Heart left ventricle (tissue), 16 donors: ENCODE measurements at regions of chr14 and their contacts with region 1.

Region 1: GRCh38 chr14:73785873-73786695 is 65.5 kb upstream of the PTGR2 start:
- DNase-seq: peak; percentile 66 to 87 (median 81)
- ATAC-seq: peak; percentile 52 to 76 (median 70)
- H3K4me3 ChIP-seq: peak overlapping the region; percentile 47 to 95 (median 78)
- H3K27ac ChIP-seq: peak overlapping the region; percentile 95 to 100 (median 98)
- H3K4me1 ChIP-seq: peaks cover 22 to 86% (median 77%) of the 10 kb centered on the region in 12 donors
- H3K27me3 ChIP-seq: no peaks in the 10 kb centered on the region
- CTCF ChIP-seq: peak in 7 of 12 donors; percentile 12 to 38 (median 23)
- POLR2A ChIP-seq: no peak

Region 2: DNA sequence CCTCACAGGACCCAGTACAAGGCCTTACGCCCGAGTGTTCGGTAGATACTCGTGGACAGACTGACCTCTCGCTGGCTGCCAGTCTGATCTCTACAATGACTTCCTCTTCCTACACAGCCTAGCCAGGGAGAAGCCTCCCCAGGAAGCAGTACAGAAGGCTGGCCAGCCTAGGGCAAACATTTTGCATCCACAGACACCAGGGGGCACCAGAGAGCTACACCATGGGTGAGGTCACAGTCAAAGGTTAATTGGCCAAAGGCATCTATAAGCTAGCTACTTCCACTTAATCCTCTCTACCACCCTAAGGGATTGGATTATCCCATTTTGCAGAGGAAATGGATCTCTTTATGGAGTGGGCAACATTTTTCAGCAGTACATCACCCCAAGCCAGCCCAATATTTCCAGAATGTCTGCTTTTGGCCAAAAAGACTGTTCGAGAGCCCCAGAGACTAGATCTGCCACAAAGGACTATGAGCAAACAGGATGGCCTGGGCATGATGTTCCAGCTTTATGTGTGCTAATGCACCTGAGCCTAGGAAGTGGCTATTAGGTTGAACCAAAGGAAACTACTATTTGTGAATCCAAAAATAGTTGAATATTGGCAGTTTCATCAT is 57.3 kb before region 1 on chr14:
- intact Hi-C with region 1: loop called in 2 of 10 experiments (anchors 2 to 10 kb)
- DNase-seq: peak; percentile 86 to 91 (median 88)
- ATAC-seq: peak; percentile 64 to 80 (median 76)
- H3K4me3 ChIP-seq: no peak overlapping the region
- H3K27ac ChIP-seq: peak overlapping the region in 10 of 12 donors; percentile 22 to 84 (median 60)
- H3K4me1 ChIP-seq: peaks cover 0 to 79% (median 57%) of the 10 kb centered on the region in 12 donors
- H3K27me3 ChIP-seq: no peaks in the 10 kb centered on the region
- CTCF ChIP-seq: peak; percentile 90 to 98 (median 96)
- POLR2A ChIP-seq: no peak

Region 3: DNA sequence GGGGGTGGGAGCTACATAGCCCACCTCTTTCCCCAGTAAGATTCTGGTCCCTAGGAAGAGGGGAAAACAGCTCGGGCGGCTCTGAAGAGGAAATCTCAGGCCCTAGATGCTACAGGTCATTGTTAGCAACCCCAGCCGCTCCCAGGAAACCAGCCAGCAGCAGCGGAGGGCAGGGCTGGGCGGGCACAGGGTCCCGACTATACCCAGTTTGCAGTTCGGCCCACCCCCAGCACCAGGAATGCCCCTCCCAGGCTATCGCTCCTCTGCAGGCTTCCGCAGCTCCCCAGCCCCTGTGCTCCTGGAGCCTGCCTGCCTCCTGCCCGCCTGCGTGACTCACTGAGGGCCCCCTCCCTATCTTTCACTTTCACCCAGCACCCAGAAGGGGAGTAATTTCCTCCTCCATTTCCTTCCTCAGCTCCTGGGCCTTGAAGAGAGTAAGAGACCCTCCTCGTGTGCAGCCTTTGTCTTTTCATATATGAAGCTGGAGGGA is 44.7 kb before region 1 on chr14:
- intact Hi-C with region 1: loop called in 1 of 10 experiments (anchors 1 kb)
- DNase-seq: peak; percentile 83 to 89 (median 85)
- ATAC-seq: peak; percentile 60 to 89 (median 78)
- H3K4me3 ChIP-seq: peak overlapping the region in 9 of 12 donors; percentile 7 to 48 (median 28)
- H3K27ac ChIP-seq: peak overlapping the region; percentile 61 to 100 (median 82)
- H3K4me1 ChIP-seq: peaks cover 52 to 83% (median 80%) of the 10 kb centered on the region in 12 donors
- H3K27me3 ChIP-seq: no peaks in the 10 kb centered on the region
- CTCF ChIP-seq: no peak
- POLR2A ChIP-seq: no peak

Region 4: DNA sequence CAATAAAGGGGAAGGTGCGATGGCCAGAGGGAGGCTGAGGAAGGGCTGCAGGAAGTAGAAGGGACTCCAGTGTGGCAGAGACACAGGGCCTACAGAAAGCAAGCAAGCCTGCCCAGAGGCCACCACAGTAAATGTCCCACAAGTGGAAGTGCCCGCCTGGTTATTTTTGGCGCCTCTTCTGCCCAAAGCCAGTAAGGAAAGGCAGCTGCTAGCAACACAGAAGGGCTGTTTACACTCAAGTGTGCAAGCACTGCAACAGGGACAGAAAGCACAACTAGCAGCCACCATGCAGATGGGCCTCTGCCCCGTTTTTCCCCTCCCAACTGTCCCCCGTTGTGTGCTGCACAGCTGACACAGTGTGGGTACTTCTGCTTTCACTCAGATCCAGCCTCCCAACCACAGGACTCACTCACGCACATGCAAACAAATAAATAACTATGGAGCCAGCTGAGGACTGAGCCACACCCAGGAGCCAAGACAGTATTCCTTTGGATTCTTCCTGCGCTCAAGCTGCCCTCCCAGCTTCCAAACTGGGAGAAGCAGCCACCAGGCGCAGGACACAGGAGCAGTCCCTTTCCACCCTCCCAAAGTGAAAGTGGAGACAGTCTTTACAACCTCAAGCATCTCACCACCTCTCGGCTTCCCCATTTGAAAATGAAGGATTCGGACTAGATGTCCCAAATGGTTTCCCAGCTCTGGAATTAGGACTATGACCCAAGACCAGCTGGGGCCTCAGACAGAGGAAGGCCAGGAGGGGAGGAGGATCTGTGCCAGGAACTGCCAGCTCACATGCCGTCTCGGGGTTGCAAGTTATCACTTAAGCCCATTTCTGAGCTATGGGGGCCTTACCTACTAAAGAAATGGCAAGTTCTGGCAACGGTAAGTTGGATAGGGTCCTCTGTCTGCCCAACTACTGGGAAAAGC is 31.9 kb before region 1 on chr14:
- intact Hi-C with region 1: loop called in 9 of 10 experiments (anchors 2 to 5 kb)
- DNase-seq: peak in 2 of 5 donors; percentile 53 to 73
- ATAC-seq: peak; percentile 7 to 45 (median 20)
- H3K4me3 ChIP-seq: peak overlapping the region in 10 of 12 donors; percentile 6 to 46 (median 23)
- H3K27ac ChIP-seq: peak overlapping the region; percentile 84 to 100 (median 94)
- H3K4me1 ChIP-seq: peaks cover 60 to 100% (median 97%) of the 10 kb centered on the region in 12 donors
- H3K27me3 ChIP-seq: no peaks in the 10 kb centered on the region
- CTCF ChIP-seq: no peak
- POLR2A ChIP-seq: no peak

Region 5: DNA sequence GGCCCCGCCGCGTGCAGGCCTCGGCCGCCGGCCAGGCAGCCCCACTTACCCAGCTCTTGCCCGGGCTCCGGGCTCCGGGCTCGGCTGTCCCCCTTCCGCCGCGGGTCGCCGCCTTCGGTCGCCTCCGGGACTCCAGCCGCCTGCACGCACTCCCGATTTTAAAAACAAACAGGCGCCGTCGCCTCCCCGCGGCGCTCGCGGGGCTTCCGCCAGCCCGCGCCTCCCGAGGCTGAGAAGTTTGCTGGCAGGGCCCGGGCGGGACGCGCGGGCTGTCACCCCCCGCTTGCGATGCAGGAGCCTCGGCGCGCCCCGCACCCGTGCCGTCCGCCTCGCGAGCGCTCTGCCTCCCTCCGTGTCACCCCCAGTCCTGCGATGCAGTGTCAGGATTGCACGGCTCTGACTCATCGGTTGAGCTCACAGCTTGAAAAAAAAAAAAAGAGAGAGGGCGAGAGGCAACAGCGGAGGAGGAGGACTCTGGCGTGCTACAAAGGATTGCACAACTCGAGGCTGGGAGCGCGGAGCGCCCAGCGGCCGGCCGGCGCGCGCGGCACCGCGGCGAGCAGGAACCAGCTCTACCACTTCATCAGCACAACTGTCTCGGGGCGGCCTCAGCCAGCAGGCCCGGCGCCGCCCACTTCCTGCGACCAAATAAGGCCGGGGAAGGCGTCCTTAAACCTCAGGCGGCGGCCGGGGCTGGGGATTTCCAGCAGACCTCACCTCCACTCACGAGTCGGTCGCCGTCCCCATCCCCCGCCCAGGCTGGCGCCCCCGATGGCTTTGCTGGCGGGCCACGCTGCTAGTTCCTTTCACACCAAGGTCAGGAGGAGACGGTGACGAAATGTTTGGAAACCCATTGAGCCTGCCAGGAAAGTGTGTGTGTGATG is 26.1 kb before region 1 on chr14:
- intact Hi-C with region 1: loop called in 5 of 10 experiments (anchors 1 to 2 kb)
- DNase-seq: peak; percentile 96 to 97 (median 97)
- ATAC-seq: peak; percentile 55 to 89 (median 86)
- H3K4me3 ChIP-seq: peak overlapping the region; percentile 64 to 95 (median 79)
- H3K27ac ChIP-seq: peak overlapping the region; percentile 89 to 100 (median 98)
- H3K4me1 ChIP-seq: peaks cover 34 to 96% (median 86%) of the 10 kb centered on the region in 12 donors
- H3K27me3 ChIP-seq: no peaks in the 10 kb centered on the region
- CTCF ChIP-seq: peak in 3 of 12 donors; percentile 8 to 32 (median 32)
- POLR2A ChIP-seq: peak in 1 of 2 donors; percentile 68

Region 6: GRCh38 chr14:73825551-73826188 is 39.6 kb after region 1 on chr14:
- intact Hi-C with region 1: loop called in 6 of 10 experiments (anchors 5 kb)
- DNase-seq: peak; percentile 88 to 95 (median 92)
- ATAC-seq: peak; percentile 90 to 98 (median 96)
- H3K4me3 ChIP-seq: no peak overlapping the region
- H3K27ac ChIP-seq: peak overlapping the region in 1 of 12 donors; percentile 10
- H3K4me1 ChIP-seq: peaks cover 0 to 21% (median 7%) of the 10 kb centered on the region in 12 donors
- H3K27me3 ChIP-seq: no peaks in the 10 kb centered on the region
- CTCF ChIP-seq: peak; percentile 85 to 98 (median 94)
- POLR2A ChIP-seq: no peak